Activated T-helper 1 cell treated with anti-CD3 and anti-CD28 coated beads, Interleukin-12 subunit alpha, Interleukin-12 subunit beta, Interleukin-2, Interleukin-4 antibody, amounts not matched to agents 30 ng/mL and 10 ng/mL and 1 ng/mL, durations not matched to agents 14 hours and 24 hours and 36 hours (primary cell): ENCODE measurements at regions of chr2 and their contacts with region 1.

Region 1: DNA sequence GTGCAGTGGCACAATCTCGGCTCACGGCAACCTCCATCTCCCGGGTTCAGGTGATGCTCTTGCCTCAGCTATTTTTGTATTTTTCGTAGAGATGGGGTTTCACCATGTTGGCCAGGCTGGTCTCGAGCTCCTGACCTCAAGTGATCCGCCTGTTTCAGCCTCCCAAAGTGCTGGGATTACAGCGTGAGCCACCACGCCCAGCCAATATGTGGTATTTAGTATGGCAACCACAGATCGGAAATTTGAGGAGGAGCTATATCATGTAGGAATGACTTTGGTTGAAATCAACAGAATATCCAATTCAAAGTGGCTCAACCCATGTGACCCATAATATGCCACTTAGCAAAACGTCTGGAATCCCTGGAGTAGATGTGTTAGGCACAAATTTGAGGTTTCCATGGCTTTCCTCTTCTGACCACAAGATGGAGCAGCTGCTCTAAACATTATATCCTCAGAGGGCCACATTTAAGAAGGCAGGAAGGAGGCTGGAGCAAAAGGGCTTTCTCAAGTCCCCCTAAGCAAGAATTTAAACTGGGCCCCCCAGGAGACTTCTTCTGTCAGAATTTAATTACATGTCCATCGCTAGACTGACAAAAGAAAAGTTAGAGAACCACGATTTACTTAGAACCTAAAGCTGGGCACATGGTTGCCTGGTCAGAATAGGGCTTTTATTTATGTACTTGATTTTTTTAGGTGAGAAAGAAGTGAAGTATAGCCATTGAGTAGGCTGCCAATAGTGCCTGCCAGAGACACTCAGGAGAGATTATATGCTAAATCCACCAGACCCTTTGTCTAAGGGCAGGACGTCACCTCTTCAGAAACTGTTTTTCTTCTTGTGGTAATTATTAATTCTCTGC is 49.6 kb upstream of the ITSN2 start:
- DNase-seq: peak; percentile 24
- H3K4me3 Mint-ChIP-seq: no peak overlapping the region
- H3K27ac Mint-ChIP-seq: no peak overlapping the region
- H3K4me1 Mint-ChIP-seq: peaks cover 5% of the 10 kb centered on the region
- H3K27me3 Mint-ChIP-seq: peaks cover 2% of the 10 kb centered on the region

Region 2: DNA sequence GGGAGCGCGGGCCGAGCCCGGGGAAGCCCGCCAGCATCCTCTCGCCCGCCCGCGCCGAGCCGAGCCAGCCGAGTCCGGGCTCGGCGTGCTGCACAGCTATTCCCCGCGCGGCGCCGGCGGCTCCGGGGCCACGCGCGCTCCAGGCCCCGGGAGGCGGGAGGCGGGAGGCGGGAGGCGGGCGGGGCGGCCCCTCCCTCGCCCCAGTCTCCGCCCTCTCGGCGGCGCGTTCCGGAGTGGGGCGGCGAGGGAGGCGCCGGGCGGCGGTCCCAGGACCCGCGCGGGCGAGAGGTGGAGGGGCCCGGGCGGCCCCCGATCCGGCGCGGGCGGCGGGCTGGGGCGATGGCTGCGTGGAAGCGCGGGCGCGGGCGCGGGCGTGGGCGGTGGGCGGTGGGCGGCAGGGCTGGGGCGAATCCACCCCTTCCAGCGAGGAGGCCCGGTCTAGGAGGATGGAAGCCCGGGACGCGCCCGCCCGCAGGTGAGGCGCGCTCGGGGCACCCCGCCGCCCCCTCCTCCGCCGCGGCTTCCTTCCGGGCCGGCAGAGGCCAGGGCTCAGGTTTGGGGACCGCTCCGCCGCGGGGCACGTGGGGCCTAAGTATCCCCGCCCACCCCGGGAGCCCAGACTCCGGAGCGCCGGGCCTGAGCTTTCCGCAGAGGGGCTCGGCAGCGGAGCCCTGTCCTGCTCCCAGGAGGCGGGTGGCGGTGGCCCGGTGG is 510.3 kb after region 1 on chr2 and contains the start of gene ADCY3:
- intact Hi-C with region 1: loop called (anchors 2 kb)
- DNase-seq: peak; percentile 49
- H3K4me3 Mint-ChIP-seq: peak within 1 kb of the TSS; percentile 93
- H3K27ac Mint-ChIP-seq: peak within 1 kb of the TSS; percentile 90
- H3K4me1 Mint-ChIP-seq: peaks cover 32% of the 10 kb centered on the region
- H3K27me3 Mint-ChIP-seq: peaks cover 2% of the 10 kb centered on the region
- total RNA-seq, gene ADCY3: 101 and 108 TPM in 2 replicates

Region 3: GRCh38 chr2:25131567-25132298 is 721.8 kb after region 1 on chr2:
- intact Hi-C with region 1: loop called (anchors 1 kb)
- DNase-seq: no peak
- H3K4me3 Mint-ChIP-seq: peak overlapping the region; percentile 68
- H3K27ac Mint-ChIP-seq: no peak overlapping the region
- H3K4me1 Mint-ChIP-seq: peaks cover 10% of the 10 kb centered on the region
- H3K27me3 Mint-ChIP-seq: peaks cover 44% of the 10 kb centered on the region